ENCODE measurements at regions of chr12 and their contacts with region 1.

Region 1: GRCh38 chr12:46071769-46072624 is 81.6 kb upstream of the SCAF11 start:
- DNase-seq: peak; percentile 56 to 69
- H3K4me3 ChIP-seq: no peak overlapping the region
- H3K27ac ChIP-seq: no peak overlapping the region
- H3K4me1 ChIP-seq: no peaks in the 10 kb centered on the region
- H3K27me3 ChIP-seq: no peaks in the 10 kb centered on the region
- CTCF ChIP-seq: peak; percentile 90

Region 2: GRCh38 chr12:46933947-46934346 is 862.0 kb after region 1 on chr12:
- CTCF ChIA-PET with region 1: no interaction called
- POLR2A ChIA-PET with region 1: no interaction called
- intact Hi-C with region 1: loop called (anchors 2 kb)
- DNase-seq: peak in 1 of 2 experiments; percentile 7
- H3K4me3 ChIP-seq: no peak overlapping the region
- H3K27ac ChIP-seq: no peak overlapping the region
- H3K4me1 ChIP-seq: no peaks in the 10 kb centered on the region; the same call in 1 of the 2 replicates
- H3K27me3 ChIP-seq: no peaks in the 10 kb centered on the region
- CTCF ChIP-seq: peak; percentile 70

Region 3: DNA sequence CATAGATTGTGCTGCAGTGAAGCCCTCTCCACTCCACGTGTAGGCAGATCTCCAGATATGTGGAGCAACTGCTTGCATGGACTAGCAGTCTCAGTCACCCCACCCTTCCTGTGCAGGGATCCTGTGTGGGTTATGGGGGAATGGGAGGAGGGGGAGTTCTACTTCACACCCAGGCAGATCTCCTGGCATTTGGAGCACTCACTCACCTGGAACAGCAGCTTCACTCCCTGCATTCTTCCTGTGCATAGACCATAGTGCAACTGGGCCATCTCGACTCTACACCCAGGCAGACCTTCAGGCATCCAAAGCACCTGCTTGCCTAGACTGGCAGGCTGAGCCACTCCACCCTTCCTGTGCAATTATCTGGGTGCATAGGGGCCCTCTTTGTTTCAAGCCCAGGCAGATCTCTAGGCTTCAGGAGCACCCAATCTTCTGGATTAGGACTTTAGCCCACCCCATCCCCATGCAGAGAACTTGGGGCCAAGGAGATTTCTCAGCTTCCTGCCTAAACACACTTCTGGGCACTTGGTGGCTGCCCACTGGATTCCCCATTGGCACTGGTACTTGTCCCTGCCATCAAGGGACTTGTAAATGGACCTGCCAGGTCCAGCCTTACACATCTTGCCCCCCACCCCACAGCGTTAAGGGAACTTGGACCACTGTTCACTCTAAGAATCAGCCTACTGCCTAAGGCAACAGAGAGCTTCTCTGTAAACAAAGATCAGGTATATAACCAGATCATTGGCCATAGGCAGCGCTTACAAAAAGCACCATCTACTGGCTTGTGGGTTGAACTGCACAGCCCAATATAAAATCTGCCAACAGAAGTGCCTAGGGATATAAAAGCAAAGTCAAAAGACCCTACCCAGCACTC is 911.6 kb after region 1 on chr12:
- CTCF ChIA-PET with region 1: no interaction called
- POLR2A ChIA-PET with region 1: no interaction called
- intact Hi-C with region 1: loop called (anchors 5 kb)
- DNase-seq: peak; percentile 44 to 62
- H3K4me3 ChIP-seq: no peak overlapping the region
- H3K27ac ChIP-seq: no peak overlapping the region
- H3K4me1 ChIP-seq: peaks cover 14% of the 10 kb centered on the region
- H3K27me3 ChIP-seq: no peaks in the 10 kb centered on the region
- CTCF ChIP-seq: peak; percentile 84

Region 4: GRCh38 chr12:47686645-47687240 is 1614.7 kb after region 1 on chr12:
- CTCF ChIA-PET with region 1: no interaction called
- POLR2A ChIA-PET with region 1: no interaction called
- intact Hi-C with region 1: loop called (anchors 5 kb)
- DNase-seq: peak in 1 of 2 experiments; percentile 38
- H3K4me3 ChIP-seq: no peak overlapping the region
- H3K27ac ChIP-seq: no peak overlapping the region
- H3K4me1 ChIP-seq: no peaks in the 10 kb centered on the region
- H3K27me3 ChIP-seq: no peaks in the 10 kb centered on the region
- CTCF ChIP-seq: peak; percentile 80